GM10248 (cell line): ENCODE measurements at regions of chr3 and their contacts with region 1.

Region 1: DNA sequence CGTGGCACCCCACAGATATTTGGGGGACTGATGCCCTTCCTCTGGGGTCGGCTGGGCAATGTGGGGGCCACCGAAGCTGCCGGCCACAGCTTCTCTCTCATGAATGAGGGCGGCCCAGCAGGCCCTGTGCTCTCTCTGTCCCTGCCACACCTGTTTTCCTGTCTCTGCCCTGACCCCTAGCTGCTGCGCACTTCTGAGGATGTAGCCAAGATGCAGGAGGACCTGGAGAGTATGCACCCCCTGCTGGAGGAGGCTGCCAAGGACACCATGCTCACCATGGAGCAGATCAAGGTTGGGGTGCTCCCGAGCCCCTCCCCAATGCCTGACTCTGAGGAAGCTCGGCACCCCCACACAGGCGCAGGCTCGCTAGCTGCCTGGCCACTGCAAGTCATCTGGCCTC is 59.7 kb downstream of the SEMA3G start:
- DNase-seq: peak; percentile 75
- CTCF ChIP-seq: peak; percentile 50

Region 2: DNA sequence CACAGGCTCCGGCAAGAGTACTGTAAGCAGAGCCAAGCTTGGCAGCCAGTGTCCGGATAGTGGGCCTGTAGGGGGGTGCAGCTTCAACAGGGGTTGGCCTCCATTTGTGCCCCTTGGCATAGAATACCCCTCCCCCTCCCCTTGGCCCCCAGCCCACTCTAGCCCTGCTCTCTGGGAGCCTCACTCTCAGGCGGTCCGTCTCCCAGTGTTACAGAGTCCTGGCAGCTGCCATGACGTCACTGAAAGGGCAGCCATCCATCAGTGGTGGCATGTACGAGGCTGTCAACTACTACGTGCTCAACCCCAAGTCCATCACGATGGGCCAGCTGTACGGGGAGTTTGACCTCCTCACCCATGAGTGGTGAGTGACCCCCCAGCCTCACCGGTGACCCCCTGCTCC is 18.6 kb before region 1 on chr3:
- CTCF ChIA-PET with region 1: interaction called, 12 read pairs
- POLR2A ChIA-PET with region 1: no interaction called
- DNase-seq: no peak
- CTCF ChIP-seq: no peak